Activated CD4-positive, alpha-beta memory T cell treated with anti-CD3 and anti-CD28 coated beads, Interleukin-2, amount 10 ng/mL, durations not matched to agents 7 days and 5 days (primary cell): ENCODE measurements at regions of chr4 and their contacts with region 1.

Region 1: GRCh38 chr4:37826295-37827029 is at the start of gene PGM2:
- DNase-seq: peak; percentile 91
- H3K4me3 Mint-ChIP-seq: peak within 1 kb of the TSS; percentile 85
- H3K27ac Mint-ChIP-seq: peak within 1 kb of the TSS; percentile 78
- H3K4me1 Mint-ChIP-seq: peaks cover 40% of the 10 kb centered on the region
- H3K27me3 Mint-ChIP-seq: peaks cover 5% of the 10 kb centered on the region
- total RNA-seq, gene PGM2: 30.6 to 37.4 TPM

Region 2: DNA sequence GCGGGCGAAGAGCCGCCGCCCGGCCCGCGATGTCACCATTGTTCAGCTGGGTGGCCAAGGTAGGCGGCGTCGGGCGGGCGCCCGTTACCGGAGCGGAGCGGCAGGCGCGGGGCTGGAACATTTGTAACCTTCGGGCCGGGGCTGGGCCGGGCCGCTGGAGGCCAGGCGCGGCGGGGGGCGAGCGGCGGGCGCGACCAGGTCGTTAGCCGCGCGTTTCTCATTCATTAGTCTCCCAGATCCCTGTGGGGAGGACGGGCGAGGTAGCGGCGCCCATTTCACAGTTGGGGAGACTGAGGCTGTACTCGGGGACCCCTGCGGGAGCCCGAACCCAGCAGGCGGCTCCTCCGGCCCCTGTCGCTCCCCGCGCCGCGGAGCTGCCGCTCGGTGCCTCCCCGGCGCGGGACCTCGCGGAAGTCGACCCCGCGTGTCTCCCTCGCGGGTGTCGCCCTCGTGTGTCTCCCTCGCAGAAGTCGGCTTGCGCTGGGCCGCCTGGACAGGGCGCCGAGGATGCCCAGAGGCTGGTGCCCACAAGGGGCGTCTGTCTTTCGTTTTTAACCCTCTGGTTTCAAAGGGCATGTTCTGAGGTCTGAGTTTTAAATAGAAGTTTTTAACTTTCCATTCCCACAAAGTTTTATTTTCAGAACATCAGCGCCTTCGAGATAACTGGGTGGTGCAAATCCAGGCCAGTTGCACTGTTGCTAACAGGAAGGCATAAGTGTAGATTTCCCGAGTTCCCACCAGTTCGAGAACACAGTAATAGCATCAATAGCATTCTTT is 151.2 kb after region 1 on chr4:
- CTCF ChIA-PET with region 1: interaction called, 4 read pairs
- POLR2A ChIA-PET with region 1: interaction called, 11 read pairs
- DNase-seq: peak; percentile 74
- H3K4me3 Mint-ChIP-seq: peak overlapping the region; percentile 77
- H3K27ac Mint-ChIP-seq: peak overlapping the region; percentile 48
- H3K4me1 Mint-ChIP-seq: peaks cover 26% of the 10 kb centered on the region
- H3K27me3 Mint-ChIP-seq: no peaks in the 10 kb centered on the region